ENCODE measurements at regions of chr3 and their contacts with region 1.

Region 1: GRCh38 chr3:123816673-123817207 is 67.4 kb downstream of the MYLK start:
- DNase-seq: no peak
- H3K4me3 ChIP-seq: no peak overlapping the region
- H3K27ac ChIP-seq: peak overlapping the region; percentile 86 to 91
- H3K4me1 ChIP-seq: peaks cover 11 to 44% of the 10 kb centered on the region in 2 donors
- H3K27me3 ChIP-seq: no peaks in the 10 kb centered on the region
- CTCF ChIP-seq: no peak

Region 2: GRCh38 chr3:123328851-123329635 is 487.7 kb before region 1 on chr3:
- intact Hi-C with region 1: no loop called
- DNase-seq: peak in 1 of 2 donors; percentile 88
- H3K4me3 ChIP-seq: no peak overlapping the region
- H3K27ac ChIP-seq: peak overlapping the region; percentile 86
- H3K4me1 ChIP-seq: peaks cover 14 to 66% of the 10 kb centered on the region in 2 donors
- H3K27me3 ChIP-seq: no peaks in the 10 kb centered on the region
- CTCF ChIP-seq: peak; percentile 93 to 96 (median 96)

Region 3: DNA sequence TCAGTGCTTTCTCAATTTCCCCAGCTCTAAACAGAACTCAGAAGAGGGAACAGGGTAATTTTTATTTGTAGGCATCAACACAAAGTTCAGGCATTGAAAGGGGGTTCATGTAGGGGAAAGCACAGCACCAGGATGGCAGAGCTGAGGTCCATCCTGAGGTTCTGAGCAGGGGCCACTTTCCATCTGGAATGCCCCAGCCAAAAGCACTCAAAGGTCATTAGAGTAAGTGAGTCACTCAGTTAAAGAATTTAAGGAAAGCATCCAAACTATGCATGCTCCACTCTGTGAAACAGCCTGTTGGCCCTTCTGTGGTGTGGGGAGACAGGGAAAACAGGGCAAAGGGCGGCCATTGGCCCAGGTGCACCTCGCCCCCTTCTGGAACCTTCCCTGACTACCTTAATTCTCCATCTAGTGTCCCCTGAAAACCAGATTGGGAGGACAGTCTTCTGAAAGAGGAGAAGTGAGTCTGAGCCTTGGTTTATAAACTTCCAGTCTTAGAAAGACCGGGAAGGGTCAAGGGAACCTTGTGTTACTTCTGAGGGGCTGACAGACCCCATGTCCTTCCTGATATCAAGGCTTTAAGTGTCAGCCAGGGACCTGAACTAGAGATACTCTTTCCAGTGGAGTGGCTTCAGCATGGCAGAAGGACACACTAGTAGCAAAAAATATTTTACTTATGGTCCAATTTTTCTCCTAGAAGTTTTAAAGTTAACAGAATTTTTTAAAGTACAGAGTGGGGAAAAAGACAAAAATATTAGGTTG is 65.9 kb before region 1 on chr3:
- intact Hi-C with region 1: loop called (anchors 2 kb)
- DNase-seq: peak in 1 of 2 donors; percentile 72
- H3K4me3 ChIP-seq: no peak overlapping the region
- H3K27ac ChIP-seq: peak overlapping the region; percentile 74 to 81
- H3K4me1 ChIP-seq: peaks cover 10 to 44% of the 10 kb centered on the region in 2 donors
- H3K27me3 ChIP-seq: no peaks in the 10 kb centered on the region
- CTCF ChIP-seq: no peak

Region 4: GRCh38 chr3:123799544-123800361 is 17.0 kb before region 1 on chr3:
- intact Hi-C with region 1: no loop called
- DNase-seq: no peak
- H3K4me3 ChIP-seq: peak overlapping the region; percentile 11 to 33
- H3K27ac ChIP-seq: peak overlapping the region; percentile 54 to 74
- H3K4me1 ChIP-seq: peaks cover 4 to 17% of the 10 kb centered on the region in 2 donors
- H3K27me3 ChIP-seq: no peaks in the 10 kb centered on the region
- CTCF ChIP-seq: no peak

Region 5: GRCh38 chr3:123859177-123859576 is 42.4 kb after region 1 on chr3:
- intact Hi-C with region 1: no loop called
- DNase-seq: no peak
- H3K4me3 ChIP-seq: no peak overlapping the region
- H3K27ac ChIP-seq: peak overlapping the region; percentile 59 to 79
- H3K4me1 ChIP-seq: peaks cover 3 to 27% of the 10 kb centered on the region in 2 donors
- H3K27me3 ChIP-seq: no peaks in the 10 kb centered on the region
- CTCF ChIP-seq: no peak

Measured in ascending aorta (tissue), 2 donors.